ENCODE measurements at regions of chr4 and their contacts with region 1.

Region 1: GRCh38 chr4:26319467-26319948 is 1.3 kb upstream of the RBPJ start:
- DNase-seq: peak; percentile 97 to 98 (median 98)
- ATAC-seq: peak; percentile 93 to 95 (median 94)
- H3K4me3 ChIP-seq: peak overlapping the region; percentile 44 to 92 (median 74)
- H3K27ac ChIP-seq: peak overlapping the region; percentile 63 to 97 (median 92)
- H3K4me1 ChIP-seq: peaks cover 0 to 39% (median 28%) of the 10 kb centered on the region in 12 donors
- H3K27me3 ChIP-seq: no peaks in the 10 kb centered on the region
- CTCF ChIP-seq: peak in 5 of 12 donors; percentile 6 to 31 (median 20)
- POLR2A ChIP-seq: peak in 1 of 2 donors; percentile 29

Region 2: GRCh38 chr4:25098964-25099891 is 1220.3 kb before region 1 on chr4:
- intact Hi-C with region 1: no loop called
- DNase-seq: peak; percentile 78 to 89 (median 87)
- ATAC-seq: peak; percentile 79 to 92 (median 90)
- H3K4me3 ChIP-seq: no peak overlapping the region
- H3K27ac ChIP-seq: peak overlapping the region; percentile 40 to 87 (median 79)
- H3K4me1 ChIP-seq: peaks cover 0 to 37% (median 26%) of the 10 kb centered on the region in 12 donors
- H3K27me3 ChIP-seq: no peaks in the 10 kb centered on the region
- CTCF ChIP-seq: no peak
- POLR2A ChIP-seq: no peak

Region 3: DNA sequence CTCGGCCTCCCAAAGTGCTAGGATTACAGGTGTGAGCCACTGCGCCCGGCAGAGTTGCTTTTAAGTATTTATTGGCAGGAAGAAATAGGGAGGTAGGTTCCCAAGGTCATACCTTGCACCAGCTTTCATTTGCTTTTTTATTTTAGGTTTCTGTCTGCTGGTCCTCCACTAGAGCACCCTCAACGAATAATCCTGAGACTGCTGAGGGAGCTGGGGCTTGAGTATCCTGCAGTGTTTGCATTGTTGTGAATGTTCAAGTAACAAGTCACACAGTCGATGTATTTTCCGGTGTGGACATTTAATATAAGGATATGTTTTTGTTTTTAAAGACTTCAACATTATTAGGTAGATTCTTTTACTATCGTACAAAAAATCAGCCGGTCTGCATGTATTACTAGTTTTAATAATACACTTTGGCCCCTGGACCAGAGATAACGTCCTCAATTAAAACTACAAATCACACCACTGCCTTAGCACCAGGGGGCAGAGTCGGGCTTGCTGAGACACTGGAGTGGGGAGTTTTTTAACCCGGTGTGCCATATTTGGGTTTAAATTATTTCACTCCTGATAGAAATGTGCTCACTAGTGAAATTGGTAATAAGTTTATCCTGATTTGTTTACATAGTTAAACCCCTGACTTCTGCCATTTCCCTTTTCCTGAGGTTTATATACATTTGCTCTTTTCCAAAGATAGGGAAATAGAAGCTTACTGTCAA is 393.9 kb before region 1 on chr4:
- intact Hi-C with region 1: loop called in 6 of 10 experiments (anchors 5 to 10 kb)
- DNase-seq: peak in 3 of 5 donors; percentile 38 to 58 (median 44)
- ATAC-seq: peak in 1 of 4 donors; percentile 45
- H3K4me3 ChIP-seq: no peak overlapping the region
- H3K27ac ChIP-seq: no peak overlapping the region
- H3K4me1 ChIP-seq: peaks cover 0 to 52% (median 31%) of the 10 kb centered on the region in 12 donors
- H3K27me3 ChIP-seq: no peaks in the 10 kb centered on the region
- CTCF ChIP-seq: peak; percentile 28 to 66 (median 54)
- POLR2A ChIP-seq: no peak

Region 4: GRCh38 chr4:25981749-25982148 is 337.8 kb before region 1 on chr4:
- intact Hi-C with region 1: loop called in 2 of 10 experiments (anchors 10 kb)
- DNase-seq: peak in 2 of 5 donors; percentile 68 to 84
- ATAC-seq: peak; percentile 88 to 97 (median 95)
- H3K4me3 ChIP-seq: no peak overlapping the region
- H3K27ac ChIP-seq: no peak overlapping the region
- H3K4me1 ChIP-seq: no peaks in the 10 kb centered on the region
- H3K27me3 ChIP-seq: no peaks in the 10 kb centered on the region
- CTCF ChIP-seq: no peak
- POLR2A ChIP-seq: no peak

Region 5: DNA sequence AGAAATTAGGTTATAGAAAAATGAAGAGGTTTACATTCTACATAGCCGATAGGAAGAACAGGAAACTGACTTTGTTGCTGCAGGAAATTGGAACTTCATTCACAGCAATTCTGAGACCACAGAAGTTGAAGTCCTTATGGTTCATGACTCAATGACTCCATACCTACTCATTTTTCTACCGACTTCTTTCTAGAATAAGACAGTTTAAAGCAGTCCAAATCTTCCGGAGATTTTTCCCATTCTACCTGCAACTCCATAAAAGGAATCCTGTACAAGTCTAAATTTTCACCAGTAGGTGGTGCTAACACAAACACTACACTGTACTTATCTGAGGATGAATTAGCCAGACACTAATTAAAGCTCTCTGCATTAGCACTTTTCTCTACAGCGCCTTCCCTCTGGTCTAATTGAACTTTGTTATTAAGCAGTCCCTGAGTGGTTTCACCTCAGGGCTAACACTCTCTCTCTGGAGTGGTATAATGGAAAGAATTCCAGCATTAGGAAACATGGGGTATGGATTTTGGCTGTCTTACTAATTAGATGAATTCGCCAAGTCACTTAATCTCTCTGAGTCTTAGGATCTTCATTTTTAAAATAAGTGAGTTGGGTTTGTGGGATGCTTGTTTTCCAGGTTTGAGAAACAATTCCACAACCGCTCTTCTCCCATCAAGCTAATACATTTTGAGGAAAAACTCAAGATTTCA is 237.6 kb before region 1 on chr4:
- intact Hi-C with region 1: loop called in 6 of 10 experiments (anchors 5 to 10 kb)
- DNase-seq: no peak
- ATAC-seq: peak; percentile 43 to 66 (median 55)
- H3K4me3 ChIP-seq: no peak overlapping the region
- H3K27ac ChIP-seq: peak overlapping the region in 1 of 12 donors; percentile 55
- H3K4me1 ChIP-seq: peaks cover 0 to 40% (median 0%) of the 10 kb centered on the region in 12 donors
- H3K27me3 ChIP-seq: peaks cover 0 to 3% (median 0%) of the 10 kb centered on the region in 9 donors
- CTCF ChIP-seq: peak; percentile 49 to 76 (median 69)
- POLR2A ChIP-seq: no peak

Region 6: DNA sequence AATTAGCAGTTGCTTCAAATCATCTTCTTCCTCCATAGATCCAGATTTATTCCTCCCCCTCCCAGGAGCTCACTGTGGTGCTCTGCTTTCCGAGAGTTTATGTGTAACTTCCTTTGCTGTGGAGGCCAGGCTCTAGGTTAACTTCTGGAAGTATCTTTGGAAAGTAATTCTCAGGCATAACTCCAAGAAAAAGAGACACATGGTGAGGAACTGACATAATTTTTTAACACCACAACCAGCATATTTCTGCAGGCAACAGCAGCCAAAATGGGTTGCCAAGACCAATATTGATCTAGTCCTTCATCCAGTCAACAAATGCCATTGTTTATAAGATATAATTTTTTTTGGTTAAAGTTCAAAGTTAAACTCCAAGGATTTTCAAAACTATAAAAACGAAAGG is 113.2 kb before region 1 on chr4:
- intact Hi-C with region 1: loop called in 1 of 10 experiments (anchors 10 kb)
- DNase-seq: peak in 3 of 5 donors; percentile 44 to 46 (median 44)
- ATAC-seq: peak; percentile 68 to 88 (median 80)
- H3K4me3 ChIP-seq: no peak overlapping the region
- H3K27ac ChIP-seq: peak overlapping the region in 5 of 12 donors; percentile 4 to 22 (median 16)
- H3K4me1 ChIP-seq: peaks cover 0 to 32% (median 10%) of the 10 kb centered on the region in 12 donors
- H3K27me3 ChIP-seq: peaks cover 0 to 4% (median 0%) of the 10 kb centered on the region in 9 donors
- CTCF ChIP-seq: no peak
- POLR2A ChIP-seq: no peak

Region 7: DNA sequence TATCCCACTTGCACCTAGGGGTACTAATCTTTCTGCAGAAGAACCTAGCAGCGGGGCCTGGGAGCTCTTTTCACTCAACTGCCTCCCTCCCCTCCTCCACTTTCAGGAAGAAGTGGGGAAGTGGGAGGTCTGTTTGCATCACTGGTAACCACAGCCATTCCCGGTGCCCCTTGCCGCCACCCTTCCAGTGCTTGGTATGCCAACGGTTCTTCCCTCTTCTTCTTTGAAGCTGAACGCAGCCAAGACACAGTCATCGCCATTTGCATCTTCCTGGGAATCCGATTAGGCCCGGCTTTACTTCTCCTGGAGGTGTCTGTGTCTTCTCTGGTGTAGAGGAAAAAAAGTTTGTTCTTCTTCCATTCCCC is 45.9 kb before region 1 on chr4:
- intact Hi-C with region 1: no loop called
- DNase-seq: peak; percentile 42 to 64 (median 57)
- ATAC-seq: peak; percentile 42 to 82 (median 66)
- H3K4me3 ChIP-seq: peak overlapping the region in 1 of 12 donors; percentile 21
- H3K27ac ChIP-seq: peak overlapping the region in 6 of 12 donors; percentile 11 to 84 (median 33)
- H3K4me1 ChIP-seq: peaks cover 0 to 25% (median 0%) of the 10 kb centered on the region in 12 donors
- H3K27me3 ChIP-seq: no peaks in the 10 kb centered on the region
- CTCF ChIP-seq: no peak
- POLR2A ChIP-seq: no peak

Measured in heart left ventricle (tissue), 16 donors.